ENCODE measurements at regions of chr11 and their contacts with region 1.

Region 1: DNA sequence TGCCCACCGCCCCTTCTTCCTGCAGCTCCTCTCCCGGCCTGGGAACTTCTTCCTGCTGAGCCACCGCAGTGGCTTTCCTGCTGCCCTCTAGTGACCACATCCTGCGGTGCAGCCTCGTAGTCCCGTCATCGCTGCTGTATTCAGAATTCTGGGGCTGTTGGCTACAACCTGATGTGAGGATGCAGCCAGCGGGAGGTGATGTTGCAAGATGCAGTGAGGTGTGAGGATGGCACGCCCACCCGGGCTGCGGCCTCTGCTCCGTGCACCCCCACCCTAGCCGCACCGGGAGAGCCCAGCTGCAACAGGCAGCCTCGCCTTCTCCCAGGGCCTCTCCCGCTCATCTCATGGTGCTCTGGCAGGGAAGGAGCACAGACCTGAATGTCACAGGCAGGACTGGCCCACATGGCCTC is 10.1 kb downstream of the CHST1 start:
- DNase-seq: peak; percentile 59
- H3K4me3 ChIP-seq: no peak overlapping the region
- H3K27ac ChIP-seq: no peak overlapping the region
- H3K4me1 ChIP-seq: no peaks in the 10 kb centered on the region
- H3K27me3 ChIP-seq: no peaks in the 10 kb centered on the region
- CTCF ChIP-seq: peak; percentile 54 to 84 (median 71)
- POLR2A ChIP-seq: no peak

Region 2: DNA sequence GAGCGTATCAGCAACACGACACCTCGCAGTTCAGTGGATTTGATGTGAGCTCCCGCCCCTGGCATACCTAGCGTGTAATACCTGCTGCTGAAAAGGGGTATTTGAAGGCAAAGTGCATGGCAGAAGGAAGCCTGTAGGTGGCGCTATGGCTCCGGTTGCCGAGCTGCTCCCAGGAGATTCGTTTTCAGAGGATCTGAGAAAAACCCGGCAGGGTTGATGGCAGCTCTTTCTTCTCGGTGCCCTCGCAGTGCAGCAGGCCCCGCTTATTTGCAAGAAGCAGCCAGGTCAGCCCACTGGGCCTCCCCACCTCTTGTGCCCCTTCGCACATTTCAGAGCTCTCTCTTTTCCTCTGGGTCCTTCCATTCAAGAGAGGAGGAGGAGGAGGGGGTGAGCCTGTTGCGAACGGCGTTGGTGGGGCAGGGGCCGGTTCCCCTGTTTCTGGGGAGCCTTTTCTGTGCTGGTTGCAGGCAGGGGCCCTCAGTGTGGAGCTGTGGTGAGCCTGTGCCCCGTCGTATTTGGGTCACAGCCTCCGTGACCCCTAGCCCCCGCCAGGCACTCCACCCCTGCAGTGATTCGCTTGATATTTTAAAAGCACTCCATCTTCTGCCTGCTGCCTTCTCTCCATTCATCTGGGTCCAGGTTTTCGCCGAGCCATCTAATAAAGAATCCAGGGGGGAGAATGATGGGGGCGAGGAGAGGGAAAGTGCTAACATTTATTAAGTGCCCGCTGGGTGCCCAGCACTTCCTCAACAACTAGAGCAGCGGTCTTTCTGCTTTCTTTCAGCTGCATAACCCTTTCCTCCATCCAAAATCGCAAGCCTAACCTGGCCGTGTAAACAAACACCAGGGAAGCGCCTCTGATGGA is 283.9 kb before region 1 on chr11:
- intact Hi-C with region 1: loop called (anchors 2 kb)
- DNase-seq: peak; percentile 63
- H3K4me3 ChIP-seq: no peak overlapping the region
- H3K27ac ChIP-seq: no peak overlapping the region
- H3K4me1 ChIP-seq: peaks cover 2% of the 10 kb centered on the region
- H3K27me3 ChIP-seq: no peaks in the 10 kb centered on the region
- CTCF ChIP-seq: peak; percentile 75 to 87 (median 81)
- POLR2A ChIP-seq: no peak

Region 3: GRCh38 chr11:45538363-45538762 is 117.0 kb before region 1 on chr11:
- intact Hi-C with region 1: loop called (anchors 5 kb)
- DNase-seq: no peak
- H3K4me3 ChIP-seq: no peak overlapping the region
- H3K27ac ChIP-seq: no peak overlapping the region
- H3K4me1 ChIP-seq: no peaks in the 10 kb centered on the region
- H3K27me3 ChIP-seq: no peaks in the 10 kb centered on the region
- CTCF ChIP-seq: no peak
- POLR2A ChIP-seq: no peak

Measured in prostate gland (tissue), 2 donors.